HepG2 (cell line): ENCODE measurements at regions of chr5 and their contacts with region 1.

Region 1: GRCh38 chr5:56164376-56164775 is 68.8 kb downstream of the ANKRD55 start:
- DNase-seq: no peak
- ATAC-seq: peak; percentile 28; the same call in 2 of the 3 replicates
- H3K4me3 ChIP-seq: no peak overlapping the region
- H3K27ac ChIP-seq: no peak overlapping the region
- H3K4me1 ChIP-seq: peaks cover 57% of the 10 kb centered on the region
- H3K27me3 ChIP-seq: no peaks in the 10 kb centered on the region
- CTCF ChIP-seq: no peak
- EP300 ChIP-seq: no peak
- POLR2A ChIP-seq: no peak
- RAD21 ChIP-seq: no peak

Region 2: GRCh38 chr5:54985301-54986268 is 1178.8 kb before region 1 on chr5 and contains the start of gene ESM1:
- CTCF ChIA-PET with region 1: no interaction called
- POLR2A ChIA-PET with region 1: no interaction called
- in situ Hi-C with region 1: no loop called
- intact Hi-C with region 1: loop called (anchors 5 kb)
- DNase-seq: no peak
- ATAC-seq: peak; percentile 87
- H3K4me3 ChIP-seq: no peak within 1 kb of the TSS
- H3K27ac ChIP-seq: no peak within 1 kb of the TSS
- H3K4me1 ChIP-seq: no peaks in the 10 kb centered on the region
- H3K27me3 ChIP-seq: peaks cover 3 to 21% of the 10 kb centered on the region in 2 experiments
- CTCF ChIP-seq: no peak
- EP300 ChIP-seq: no peak
- POLR2A ChIP-seq: no peak
- RAD21 ChIP-seq: no peak
- total RNA-seq, gene ESM1: not detected in 2 replicates